Spleen (tissue), 13 donors: ENCODE measurements at regions of chr5 and their contacts with region 1.

Region 1: GRCh38 chr5:135829681-135830383 is 4.6 kb upstream of the SLC25A48 start:
- DNase-seq: no peak
- H3K4me3 ChIP-seq: no peak overlapping the region
- H3K27ac ChIP-seq: no peak overlapping the region
- H3K4me1 ChIP-seq: peaks cover 0 to 16% (median 9%) of the 10 kb centered on the region in 6 donors
- H3K27me3 ChIP-seq: peaks cover 0 to 57% (median 18%) of the 10 kb centered on the region in 7 donors
- CTCF ChIP-seq: peak in 8 of 11 experiments; percentile 35 to 72 (median 56)
- POLR2A ChIP-seq: no peak

Region 2: GRCh38 chr5:135560858-135561257 is 269.0 kb before region 1 on chr5:
- intact Hi-C with region 1: loop called (anchors 5 kb)
- DNase-seq: peak; percentile 81
- H3K4me3 ChIP-seq: no peak overlapping the region
- H3K27ac ChIP-seq: no peak overlapping the region
- H3K4me1 ChIP-seq: peaks cover 0 to 7% (median 6%) of the 10 kb centered on the region in 6 donors
- H3K27me3 ChIP-seq: peaks cover 0 to 59% (median 9%) of the 10 kb centered on the region in 7 donors
- CTCF ChIP-seq: peak; percentile 28 to 84 (median 70)
- POLR2A ChIP-seq: no peak

Region 3: GRCh38 chr5:135999406-136000139 is 169.7 kb after region 1 on chr5:
- intact Hi-C with region 1: no loop called
- DNase-seq: no peak
- H3K4me3 ChIP-seq: no peak overlapping the region
- H3K27ac ChIP-seq: peak overlapping the region in 4 of 8 donors; percentile 13 to 57 (median 48)
- H3K4me1 ChIP-seq: peaks cover 0 to 34% (median 4%) of the 10 kb centered on the region in 6 donors
- H3K27me3 ChIP-seq: peaks cover 0 to 4% (median 0%) of the 10 kb centered on the region in 7 donors
- CTCF ChIP-seq: no peak
- POLR2A ChIP-seq: no peak

Region 4: DNA sequence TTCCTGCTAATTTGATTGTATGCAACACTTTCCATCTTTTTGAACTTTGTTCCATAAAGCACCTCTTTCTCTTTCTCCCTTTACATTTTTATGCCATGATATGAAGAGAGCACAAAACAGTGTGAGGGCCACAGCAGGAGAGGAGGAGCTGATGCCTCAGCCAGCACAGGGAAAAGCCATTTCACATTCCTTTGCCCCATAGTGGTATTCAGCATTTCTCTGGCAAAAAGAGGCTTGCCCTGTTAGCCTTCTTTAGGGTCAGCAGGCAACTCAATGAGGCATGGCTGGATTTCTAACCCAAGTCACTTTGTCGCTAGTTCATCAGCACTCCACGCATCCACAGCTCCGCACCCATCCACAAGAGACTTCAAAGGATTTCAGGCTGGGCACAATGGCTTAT is 558.6 kb after region 1 on chr5:
- intact Hi-C with region 1: no loop called
- DNase-seq: no peak
- H3K4me3 ChIP-seq: no peak overlapping the region
- H3K27ac ChIP-seq: no peak overlapping the region
- H3K4me1 ChIP-seq: no peaks in the 10 kb centered on the region
- H3K27me3 ChIP-seq: peaks cover 0 to 6% (median 0%) of the 10 kb centered on the region in 7 donors
- CTCF ChIP-seq: no peak
- POLR2A ChIP-seq: no peak